Head of caudate nucleus (tissue), 42 donors: ENCODE measurements at regions of chr18 and their contacts with region 1.

Region 1: GRCh38 chr18:79380816-79381806 is 14.6 kb upstream of the NFATC1 start:
- DNase-seq: peak in 41 of 42 donors; percentile 61 to 92 (median 79)

Region 2: DNA sequence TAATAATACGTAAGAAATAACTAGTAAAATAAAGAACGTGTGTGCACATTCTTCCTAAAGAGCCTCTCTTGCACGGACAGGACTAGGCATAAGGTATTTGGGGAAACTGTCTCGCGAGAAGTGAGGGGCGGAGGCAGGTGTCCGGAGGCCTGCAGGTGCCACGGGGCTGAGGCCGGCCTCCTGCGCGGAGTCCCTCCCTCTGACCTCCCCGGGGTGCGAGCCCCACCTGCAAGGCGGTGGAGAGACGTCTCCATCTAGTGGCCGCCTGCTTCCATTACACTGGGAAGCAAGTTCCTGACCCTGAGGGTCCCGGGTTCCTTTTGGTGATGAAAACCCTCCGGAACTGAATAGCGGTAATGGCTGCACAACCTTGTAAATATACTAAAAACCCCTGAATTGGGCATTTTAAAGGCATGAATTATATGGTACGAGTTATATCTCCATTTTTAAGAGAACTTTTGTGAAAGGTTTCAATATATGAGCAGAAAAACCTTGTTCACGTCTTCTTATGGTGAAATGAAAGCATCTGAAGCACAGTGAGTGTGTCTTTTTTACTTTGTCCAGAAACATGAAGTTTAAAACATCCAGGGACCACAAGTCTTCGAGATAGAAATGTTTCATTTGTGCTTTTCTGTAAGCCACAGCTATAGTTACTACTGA is 263.0 kb after region 1 on chr18:
- intact Hi-C with region 1: loop called (anchors 2 kb)
- DNase-seq: peak; percentile 41 to 88 (median 73)

Region 3: DNA sequence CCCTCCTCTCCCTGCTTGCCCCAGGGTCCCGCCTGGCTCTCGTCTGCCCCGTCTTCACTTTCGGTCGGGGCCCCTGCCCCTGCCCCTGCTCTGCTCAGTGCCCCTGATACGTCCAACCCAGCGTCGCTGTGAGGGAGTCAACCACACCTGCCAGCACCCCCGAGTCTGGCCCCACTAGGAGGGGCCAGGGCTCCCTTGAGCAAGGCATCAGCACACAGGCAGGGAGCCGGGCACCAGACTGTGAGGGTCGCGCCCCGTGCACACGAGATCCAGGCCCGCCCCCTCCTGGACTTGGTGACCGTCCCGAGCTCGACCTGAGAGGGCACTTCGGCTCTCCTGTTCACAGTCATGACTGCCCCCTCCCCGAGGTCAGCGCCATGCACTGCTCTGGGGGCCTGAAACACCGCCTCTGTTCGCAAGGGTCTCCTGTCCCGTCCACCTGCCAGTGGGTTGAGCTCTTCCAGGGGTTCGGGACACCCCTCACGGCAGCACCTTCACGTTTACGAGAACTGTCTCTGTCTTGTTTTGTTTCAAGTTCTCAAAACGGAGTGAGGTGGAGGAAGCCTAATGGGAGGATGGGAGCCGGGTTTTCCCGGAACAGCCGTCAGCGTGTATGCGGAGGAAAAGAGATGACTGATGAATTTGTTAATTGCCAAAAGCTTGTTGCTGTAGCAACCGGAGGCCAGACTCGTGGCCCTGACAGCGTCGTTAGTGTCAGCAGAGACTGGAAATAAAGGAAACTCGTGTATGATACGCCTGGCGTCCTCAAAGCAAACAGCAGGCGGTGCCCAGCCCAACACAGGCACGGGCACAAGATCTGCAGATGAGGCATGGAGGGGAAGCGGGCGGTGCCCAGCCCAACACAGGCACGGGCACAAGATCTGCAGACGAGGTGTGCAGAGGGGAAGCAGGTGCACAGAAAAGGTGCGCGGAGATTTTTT is 368.4 kb after region 1 on chr18:
- intact Hi-C with region 1: no loop called
- DNase-seq: peak; percentile 23 to 90 (median 70)